SK-N-SH (cell line): ENCODE measurements at regions of chr17 and their contacts with region 1.

Region 1: DNA sequence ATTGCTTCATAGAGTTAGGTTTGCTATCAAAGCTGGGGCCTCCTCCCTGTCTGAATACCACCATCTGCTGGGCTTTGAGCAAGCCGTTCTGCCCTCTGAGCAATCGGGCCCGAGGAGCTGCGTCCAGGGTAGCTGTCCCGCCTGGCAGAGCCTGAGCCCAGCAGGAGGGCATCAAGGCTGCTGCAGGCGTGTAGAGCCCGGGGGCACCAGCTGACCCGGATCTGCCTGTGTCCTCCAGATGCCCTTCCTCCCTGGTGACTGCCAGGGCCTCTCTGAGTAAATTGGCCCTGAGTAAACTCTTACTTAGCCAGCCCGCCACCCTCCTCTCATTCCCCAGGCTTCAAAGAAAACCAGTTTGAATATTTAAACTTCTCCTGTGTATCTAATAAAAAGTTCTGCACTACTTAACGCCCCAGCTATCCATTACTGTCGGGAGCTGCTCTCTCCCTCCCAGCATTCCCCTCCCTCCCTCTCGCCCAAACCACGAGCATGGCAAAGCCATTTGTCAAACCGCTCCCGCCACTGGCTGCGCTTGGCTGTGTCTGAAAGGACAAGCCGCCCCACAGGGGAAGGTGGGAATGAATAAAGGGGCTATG is 16.4 kb downstream of the CDK5RAP3 start:
- DNase-seq: peak; percentile 87
- H3K4me3 ChIP-seq: no peak overlapping the region
- H3K27ac ChIP-seq: peak overlapping the region in 1 of 2 experiments; percentile 92; a peak in 2 of 4 replicates
- H3K4me1 ChIP-seq: peaks cover 13 to 61% of the 10 kb centered on the region in 2 experiments
- H3K27me3 ChIP-seq: no peaks in the 10 kb centered on the region
- CTCF ChIP-seq: no peak
- EP300 ChIP-seq: peak in 1 of 2 experiments; percentile 85; a peak in 2 of 4 replicates
- RAD21 ChIP-seq: peak; percentile 48

Region 2: DNA sequence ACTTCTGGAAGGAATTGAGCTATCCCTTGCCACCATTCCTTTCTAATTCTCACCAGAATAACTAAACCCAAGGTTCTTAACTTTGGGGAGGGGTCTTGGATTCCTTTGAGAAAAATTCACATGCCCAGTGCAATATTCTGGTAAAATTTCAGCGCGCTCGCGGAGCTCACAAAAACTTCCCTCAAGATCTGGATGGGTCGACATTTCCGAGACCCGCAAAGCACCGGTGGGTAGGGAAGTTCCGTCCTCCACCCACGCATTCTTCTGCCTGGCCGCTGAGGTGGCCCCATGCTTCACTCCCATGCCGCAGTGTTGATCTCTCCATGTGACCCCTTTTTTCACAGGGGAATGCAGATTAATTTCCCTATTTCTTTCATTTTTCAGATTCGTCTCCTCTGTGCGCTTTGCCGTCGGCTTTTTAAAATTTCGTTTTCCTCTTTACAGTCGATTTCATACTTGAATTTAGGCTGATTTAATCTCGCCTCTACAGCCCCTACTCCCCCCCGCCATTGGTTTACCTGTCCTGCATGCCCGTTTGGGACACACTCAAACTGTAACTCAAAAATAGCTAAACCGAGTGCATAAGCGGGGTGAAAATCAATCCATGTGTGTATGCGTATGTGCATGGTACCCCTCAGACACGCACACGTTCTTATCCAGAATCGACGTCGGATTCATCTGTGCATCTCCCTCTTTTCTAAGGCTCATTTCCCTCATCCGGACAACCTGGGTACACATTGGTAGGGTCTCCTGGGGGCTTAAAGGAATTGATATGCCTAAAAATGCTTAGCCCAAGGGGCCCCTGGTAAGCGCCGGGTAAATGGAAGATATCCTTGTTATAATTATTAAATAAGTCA is 135.0 kb before region 1 on chr17:
- CTCF ChIA-PET with region 1: no interaction called
- POLR2A ChIA-PET with region 1: no interaction called
- DNase-seq: no peak
- H3K4me3 ChIP-seq: no peak overlapping the region
- H3K27ac ChIP-seq: no peak overlapping the region
- H3K4me1 ChIP-seq: peaks cover 0 to 12% of the 10 kb centered on the region in 2 experiments; a peak in 1 of 4 replicates
- H3K27me3 ChIP-seq: peaks cover 95% of the 10 kb centered on the region
- CTCF ChIP-seq: no peak
- EP300 ChIP-seq: no peak
- RAD21 ChIP-seq: no peak

Region 3: DNA sequence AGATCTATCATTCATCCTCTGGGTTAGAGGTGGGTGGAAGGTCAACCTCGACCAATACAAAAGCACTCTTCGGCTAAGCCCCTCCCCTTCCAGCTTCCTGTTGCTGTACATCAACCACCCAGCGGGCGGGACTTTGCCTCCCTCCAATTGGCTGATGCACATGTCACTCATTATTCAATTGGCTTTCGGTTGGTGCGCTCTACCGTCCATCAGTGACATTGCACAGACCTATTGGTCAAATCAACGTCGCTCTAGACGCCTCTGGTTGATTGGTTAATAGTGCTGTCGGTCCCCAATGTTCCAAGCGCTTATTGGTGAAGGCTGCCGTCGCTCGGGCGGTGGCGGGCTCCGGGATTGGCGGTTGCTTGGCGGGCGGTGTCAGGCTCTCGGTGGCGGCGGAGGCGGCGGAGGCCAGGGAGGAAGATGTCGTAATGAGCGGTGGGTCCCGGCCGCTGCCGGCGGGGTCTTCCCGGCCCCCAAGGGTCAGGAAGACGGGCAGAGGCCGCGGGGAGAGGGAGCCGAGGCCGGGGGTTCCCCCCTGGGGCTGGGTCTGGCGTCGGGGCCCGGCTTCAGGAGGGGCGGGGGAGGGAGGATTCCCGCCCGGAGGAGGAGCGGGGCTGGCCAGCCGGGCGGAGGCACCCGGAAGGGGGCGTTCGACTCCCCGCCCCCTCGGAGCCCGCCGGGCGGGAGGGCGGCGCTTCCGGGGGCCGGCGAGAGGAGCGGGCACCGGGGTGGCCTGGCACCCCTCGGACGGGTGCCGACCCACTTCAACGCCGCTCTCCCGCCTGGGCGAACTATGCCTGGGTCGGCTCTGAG is 91.3 kb before region 1 on chr17 and contains the start of gene SP2:
- CTCF ChIA-PET with region 1: no interaction called
- POLR2A ChIA-PET with region 1: no interaction called
- DNase-seq: peak; percentile 99
- H3K4me3 ChIP-seq: peak within 1 kb of the TSS; percentile 94
- H3K27ac ChIP-seq: peak within 1 kb of the TSS; percentile 88 to 94
- H3K4me1 ChIP-seq: peaks cover 4 to 19% of the 10 kb centered on the region in 2 experiments; a peak in 3 of 4 replicates
- H3K27me3 ChIP-seq: no peaks in the 10 kb centered on the region
- CTCF ChIP-seq: no peak
- EP300 ChIP-seq: no peak; a peak in 1 of 4 replicates
- RAD21 ChIP-seq: no peak
- polyA plus RNA-seq, gene SP2: 8.8 and 16.7 TPM in 2 replicates

Region 4: GRCh38 chr17:47949136-47949759 is 38.1 kb before region 1 on chr17:
- CTCF ChIA-PET with region 1: interaction called, 86 read pairs
- POLR2A ChIA-PET with region 1: no interaction called
- DNase-seq: peak; percentile 90
- H3K4me3 ChIP-seq: peak overlapping the region; percentile 28 to 29
- H3K27ac ChIP-seq: peak overlapping the region; percentile 29 to 75; a peak in 3 of 4 replicates
- H3K4me1 ChIP-seq: peaks cover 4 to 11% of the 10 kb centered on the region in 2 experiments; a peak in 3 of 4 replicates
- H3K27me3 ChIP-seq: no peaks in the 10 kb centered on the region
- CTCF ChIP-seq: peak; percentile 100
- EP300 ChIP-seq: no peak
- RAD21 ChIP-seq: peak; percentile 91

Region 5: GRCh38 chr17:48002266-48002915 is 15.1 kb after region 1 on chr17:
- CTCF ChIA-PET with region 1: interaction called, 479 read pairs
- POLR2A ChIA-PET with region 1: interaction called, 77 read pairs
- DNase-seq: no peak
- H3K4me3 ChIP-seq: peak overlapping the region in 1 of 2 experiments; percentile 43; a peak in 2 of 4 replicates
- H3K27ac ChIP-seq: peak overlapping the region; percentile 99 to 100
- H3K4me1 ChIP-seq: peaks cover 61 to 65% of the 10 kb centered on the region in 2 experiments
- H3K27me3 ChIP-seq: no peaks in the 10 kb centered on the region
- CTCF ChIP-seq: no peak
- EP300 ChIP-seq: no peak
- RAD21 ChIP-seq: no peak

Region 6: GRCh38 chr17:48037036-48037837 is 49.9 kb after region 1 on chr17 and contains the start of gene COPZ2:
- CTCF ChIA-PET with region 1: no interaction called
- POLR2A ChIA-PET with region 1: no interaction called
- DNase-seq: peak; percentile 85
- H3K4me3 ChIP-seq: peak within 1 kb of the TSS; percentile 53 to 63
- H3K27ac ChIP-seq: peak within 1 kb of the TSS in 1 of 2 experiments; percentile 1; a peak in 1 of 4 replicates
- H3K4me1 ChIP-seq: peaks cover 5 to 14% of the 10 kb centered on the region in 2 experiments; a peak in 2 of 4 replicates
- H3K27me3 ChIP-seq: no peaks in the 10 kb centered on the region
- CTCF ChIP-seq: peak; percentile 69
- EP300 ChIP-seq: no peak
- RAD21 ChIP-seq: peak; percentile 13; the same call in 1 of the 2 replicates
- polyA plus RNA-seq, gene COPZ2: 31.2 and 36.9 TPM in 2 replicates